Activated CD8-positive, alpha-beta T cell treated with anti-CD3 and anti-CD28 coated beads for 36 hours (primary cell): ENCODE measurements at regions of chr16 and their contacts with region 1.

Region 1: GRCh38 chr16:84970447-84971127 is 40.7 kb downstream of the ZDHHC7 start:
- DNase-seq: peak; percentile 85
- ATAC-seq: peak; percentile 98
- H3K4me3 Mint-ChIP-seq: no peak overlapping the region
- H3K27ac Mint-ChIP-seq: no peak overlapping the region
- H3K4me1 Mint-ChIP-seq: peaks cover 4% of the 10 kb centered on the region
- H3K27me3 Mint-ChIP-seq: peaks cover 1% of the 10 kb centered on the region
- CTCF ChIP-seq: peak; percentile 88

Region 2: GRCh38 chr16:84738255-84739038 is 232.1 kb before region 1 on chr16:
- CTCF ChIA-PET with region 1: interaction called, 21 read pairs
- POLR2A ChIA-PET with region 1: no interaction called
- intact Hi-C with region 1: no loop called
- DNase-seq: peak; percentile 89
- ATAC-seq: peak; percentile 85
- H3K4me3 Mint-ChIP-seq: no peak overlapping the region
- H3K27ac Mint-ChIP-seq: peak overlapping the region; percentile 13
- H3K4me1 Mint-ChIP-seq: peaks cover 60% of the 10 kb centered on the region
- H3K27me3 Mint-ChIP-seq: no peaks in the 10 kb centered on the region
- CTCF ChIP-seq: peak; percentile 94

Region 3: DNA sequence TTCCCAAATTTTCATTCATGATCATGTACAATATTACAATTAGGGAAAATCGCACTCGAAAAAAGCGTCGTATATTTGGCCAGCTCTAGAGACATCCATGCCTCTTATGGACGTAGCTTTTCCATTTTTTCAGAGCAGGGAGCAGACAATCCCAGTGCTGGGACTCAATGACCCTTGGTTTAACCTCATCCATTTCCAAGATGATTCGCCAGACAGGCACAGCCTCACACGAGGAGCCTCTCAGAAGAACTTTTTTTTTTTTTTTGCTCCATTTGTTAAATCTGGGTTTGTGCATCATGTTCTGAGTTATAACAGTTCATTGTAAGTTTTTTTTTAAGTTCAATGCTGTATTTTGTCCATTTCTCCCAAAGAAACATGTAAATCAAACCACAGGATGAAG is 51.3 kb before region 1 on chr16:
- CTCF ChIA-PET with region 1: interaction called, 89 read pairs
- POLR2A ChIA-PET with region 1: no interaction called
- intact Hi-C with region 1: no loop called
- DNase-seq: no peak
- ATAC-seq: no peak
- H3K4me3 Mint-ChIP-seq: no peak overlapping the region
- H3K27ac Mint-ChIP-seq: no peak overlapping the region
- H3K4me1 Mint-ChIP-seq: no peaks in the 10 kb centered on the region
- H3K27me3 Mint-ChIP-seq: peaks cover 12% of the 10 kb centered on the region
- CTCF ChIP-seq: no peak

Region 4: DNA sequence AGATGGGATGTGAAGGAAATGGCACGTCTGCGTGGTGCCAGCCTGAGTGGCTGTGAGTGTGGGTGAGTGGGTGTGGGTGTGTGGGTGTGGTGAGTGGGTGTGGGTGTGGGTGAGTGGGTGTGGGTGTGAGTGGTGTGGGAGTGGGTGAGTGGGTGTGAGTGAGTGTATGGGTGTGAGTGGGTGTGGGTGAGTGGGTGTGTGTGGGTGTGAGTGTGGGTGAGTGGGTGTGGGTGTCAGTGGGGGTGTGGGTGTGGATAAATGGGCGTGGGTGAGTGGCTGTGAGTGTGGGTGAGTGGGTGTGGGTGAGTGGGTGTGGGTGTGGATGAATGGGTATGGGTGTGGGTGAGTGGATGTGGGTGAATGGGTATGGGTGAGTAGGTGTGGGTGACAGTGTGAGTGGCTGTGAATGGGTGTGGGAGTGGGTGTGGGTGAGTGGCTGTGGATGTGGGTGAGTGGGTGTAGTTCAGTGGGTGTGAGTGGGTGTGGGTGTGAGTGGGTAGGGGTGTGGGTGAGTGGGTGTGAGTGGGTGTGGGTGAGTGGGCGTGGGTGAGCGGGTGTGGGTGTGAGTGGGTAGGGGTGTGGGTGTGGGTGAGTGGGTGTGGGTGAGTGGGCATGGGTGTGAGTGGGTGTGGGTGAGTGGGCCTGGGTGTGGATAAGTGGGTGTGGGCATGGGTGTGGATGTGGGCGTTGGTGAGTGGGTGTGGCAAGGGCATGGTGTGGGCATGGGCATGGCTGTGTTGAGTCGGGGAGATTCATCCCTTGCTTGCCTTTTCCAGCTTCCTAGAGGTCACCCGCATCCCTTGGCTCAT is 40.1 kb before region 1 on chr16:
- CTCF ChIA-PET with region 1: interaction called, 89 read pairs
- POLR2A ChIA-PET with region 1: no interaction called
- intact Hi-C with region 1: loop called (anchors 1 kb)
- DNase-seq: peak; percentile 34
- ATAC-seq: no peak
- H3K4me3 Mint-ChIP-seq: peak overlapping the region; percentile 34
- H3K27ac Mint-ChIP-seq: peak overlapping the region; percentile 57
- H3K4me1 Mint-ChIP-seq: no peaks in the 10 kb centered on the region
- H3K27me3 Mint-ChIP-seq: no peaks in the 10 kb centered on the region
- CTCF ChIP-seq: no peak

Region 5: DNA sequence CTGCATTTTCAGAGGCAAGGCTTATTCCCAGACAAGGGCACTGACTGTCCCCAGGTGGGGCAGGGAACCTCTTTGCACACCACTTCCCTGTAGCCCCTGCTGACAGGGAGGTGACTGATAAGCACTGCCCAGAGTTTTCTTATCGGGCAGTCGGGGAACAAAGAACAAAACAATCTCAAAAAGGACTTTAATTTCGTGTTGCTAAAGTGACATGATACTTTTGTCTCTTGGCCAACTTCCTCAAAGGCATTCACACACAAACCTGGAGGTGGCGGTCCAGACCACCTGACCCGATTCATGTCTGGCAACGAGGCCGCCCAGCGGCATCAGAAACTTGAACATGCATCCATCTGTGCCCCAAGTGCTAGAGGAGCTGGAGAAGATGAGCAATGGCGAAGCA is 11.8 kb after region 1 on chr16:
- CTCF ChIA-PET with region 1: interaction called, 10 read pairs
- POLR2A ChIA-PET with region 1: interaction called, 3 read pairs
- intact Hi-C with region 1: no loop called
- DNase-seq: peak; percentile 13
- ATAC-seq: no peak
- H3K4me3 Mint-ChIP-seq: no peak overlapping the region
- H3K27ac Mint-ChIP-seq: peak overlapping the region; percentile 12
- H3K4me1 Mint-ChIP-seq: peaks cover 9% of the 10 kb centered on the region
- H3K27me3 Mint-ChIP-seq: no peaks in the 10 kb centered on the region
- CTCF ChIP-seq: no peak

Region 6: DNA sequence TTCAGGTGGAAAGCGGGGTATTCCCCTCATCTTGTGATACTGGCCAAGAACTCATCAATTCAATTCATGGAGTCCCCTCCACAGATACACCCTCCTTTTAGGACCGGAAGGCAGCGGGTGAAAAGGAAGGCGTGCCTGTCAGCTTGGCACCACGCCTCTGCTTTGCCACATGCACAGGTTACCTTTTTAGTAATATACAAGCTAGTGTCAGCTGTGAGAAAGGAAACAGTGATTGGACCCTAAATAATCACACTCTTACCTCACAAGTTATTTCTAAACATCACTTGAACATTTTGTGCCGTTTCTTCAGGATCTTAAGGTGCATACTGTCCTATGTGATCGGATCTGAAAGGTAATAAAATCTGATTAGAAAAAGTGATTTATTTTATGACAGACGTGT is 25.1 kb after region 1 on chr16:
- CTCF ChIA-PET with region 1: interaction called, 12 read pairs
- POLR2A ChIA-PET with region 1: no interaction called
- intact Hi-C with region 1: no loop called
- DNase-seq: peak; percentile 8
- ATAC-seq: no peak
- H3K4me3 Mint-ChIP-seq: no peak overlapping the region
- H3K27ac Mint-ChIP-seq: peak overlapping the region; percentile 28
- H3K4me1 Mint-ChIP-seq: peaks cover 14% of the 10 kb centered on the region
- H3K27me3 Mint-ChIP-seq: no peaks in the 10 kb centered on the region
- CTCF ChIP-seq: no peak

Region 7: DNA sequence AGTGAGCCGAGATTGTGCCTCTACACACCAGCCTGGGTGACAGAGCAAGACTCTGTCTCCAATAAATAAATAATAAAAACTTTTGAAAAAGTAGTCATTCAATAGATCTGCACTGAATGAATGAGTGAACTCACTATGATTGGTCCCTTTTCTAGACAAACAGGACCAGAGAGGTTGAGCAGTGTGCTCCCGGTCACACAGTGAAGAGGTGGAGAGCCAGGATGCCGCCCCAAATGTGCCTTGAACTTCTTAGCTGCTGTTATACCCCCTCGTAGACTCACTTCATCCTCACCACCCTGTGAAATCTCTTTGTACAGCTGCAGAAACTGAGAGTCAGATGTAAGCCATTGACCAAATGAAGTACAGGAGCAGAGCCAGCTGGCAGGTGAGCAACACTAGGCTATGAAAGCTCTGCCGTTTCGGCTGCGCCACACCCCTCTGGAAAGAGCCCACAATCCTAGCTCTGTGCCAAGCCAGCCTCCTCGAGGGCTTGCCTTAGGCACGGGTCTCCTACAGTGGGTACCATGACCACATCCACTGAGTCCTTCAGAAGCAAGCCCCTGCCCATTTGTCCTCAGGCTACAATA is 49.2 kb after region 1 on chr16:
- CTCF ChIA-PET with region 1: no interaction called
- POLR2A ChIA-PET with region 1: no interaction called
- intact Hi-C with region 1: no loop called
- DNase-seq: no peak
- ATAC-seq: no peak
- H3K4me3 Mint-ChIP-seq: no peak overlapping the region
- H3K27ac Mint-ChIP-seq: no peak overlapping the region
- H3K4me1 Mint-ChIP-seq: peaks cover 16% of the 10 kb centered on the region
- H3K27me3 Mint-ChIP-seq: no peaks in the 10 kb centered on the region
- CTCF ChIP-seq: no peak